Motor neuron (in vitro differentiated cells): ENCODE measurements at regions of chr2 and their contacts with region 1.

Region 1: DNA sequence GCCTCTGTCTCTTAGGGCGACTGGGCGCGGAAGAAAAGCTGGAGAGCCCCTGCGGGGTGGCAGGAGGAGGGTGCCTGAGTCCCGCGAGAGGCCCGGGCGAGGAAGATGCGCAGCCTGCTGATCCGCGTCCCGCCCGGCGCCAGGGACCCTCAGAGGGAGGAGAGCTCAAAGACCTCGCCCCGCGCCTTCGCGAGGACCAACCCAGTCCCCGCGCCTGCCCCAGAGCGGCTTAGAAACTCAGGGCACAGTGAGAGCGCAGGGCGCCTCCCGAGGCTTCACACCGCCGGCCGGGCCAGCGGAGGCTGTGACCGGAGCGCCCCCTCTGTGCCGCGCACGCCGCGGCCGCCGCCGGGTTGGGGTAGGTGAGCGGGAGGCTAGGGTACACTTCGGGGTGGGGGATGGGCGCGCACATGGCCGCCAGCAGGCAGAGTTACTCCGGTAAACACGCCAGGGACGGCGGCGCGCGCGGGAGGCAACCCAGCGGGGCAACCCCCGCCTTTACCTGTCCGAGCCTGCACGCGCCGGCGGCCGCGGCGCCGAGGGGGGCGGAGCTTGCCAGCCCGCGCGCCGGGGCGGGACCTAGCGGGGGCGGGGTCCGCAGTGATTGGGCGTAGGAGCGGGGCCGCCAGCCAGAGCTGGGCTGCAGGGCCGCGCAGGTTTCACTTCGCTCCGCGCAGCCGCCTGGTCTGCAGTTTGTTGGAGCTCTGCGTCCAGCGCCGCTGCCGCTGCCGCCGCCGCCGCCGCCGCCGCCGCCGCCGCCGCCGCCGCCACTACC is at the start of gene BCL2L11:
- ATAC-seq: peak; percentile 48 to 80 (median 76)
- H3K4me3 ChIP-seq: peak within 1 kb of the TSS; percentile 57 to 86 (median 64)
- H3K27ac ChIP-seq: no peak within 1 kb of the TSS
- H3K4me1 ChIP-seq: peaks cover 2 to 17% of the 10 kb centered on the region in 2 donors
- total RNA-seq, gene BCL2L11: 2.4 to 13.1 (median 7.3) TPM

Region 2: DNA sequence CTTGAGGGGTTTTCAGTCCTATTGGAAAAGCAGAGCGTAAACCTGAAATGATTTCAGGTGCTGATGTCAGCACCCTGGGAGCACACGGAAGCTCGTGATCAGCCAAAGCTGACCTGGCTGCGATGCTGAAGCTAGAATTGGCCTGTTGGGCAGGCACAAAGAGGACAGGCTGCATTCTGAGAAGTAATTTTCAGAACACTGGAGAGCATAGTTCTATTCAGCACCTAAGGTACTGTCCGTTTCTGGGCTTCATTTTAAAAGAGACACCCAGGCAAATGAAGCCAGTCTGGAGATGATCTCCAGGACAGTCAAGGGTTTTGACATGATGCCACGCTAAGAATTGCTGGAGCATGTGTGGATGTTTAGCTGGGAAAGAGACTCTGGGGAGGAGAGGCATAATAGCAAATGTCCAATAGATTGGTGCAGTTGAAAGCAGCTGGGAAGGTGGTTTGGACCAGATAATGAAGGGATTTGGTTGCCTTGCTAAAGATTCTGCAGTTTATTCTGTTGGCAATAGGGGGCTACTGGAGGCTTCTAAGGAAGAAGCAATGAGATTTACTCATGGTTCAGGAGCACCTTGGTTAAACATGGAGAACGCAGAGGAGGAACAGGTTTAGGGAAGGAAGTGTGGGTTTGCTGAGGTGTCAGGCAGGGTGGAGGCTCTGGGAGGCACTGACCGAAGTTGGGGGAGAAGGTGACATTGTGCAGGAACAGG is 301.5 kb before region 1 on chr2:
- in situ Hi-C with region 1: loop called in 1 of 9 experiments (anchors 10 kb)
- ATAC-seq: no peak
- H3K4me3 ChIP-seq: no peak overlapping the region
- H3K27ac ChIP-seq: no peak overlapping the region
- H3K4me1 ChIP-seq: no peaks in the 10 kb centered on the region

Region 3: DNA sequence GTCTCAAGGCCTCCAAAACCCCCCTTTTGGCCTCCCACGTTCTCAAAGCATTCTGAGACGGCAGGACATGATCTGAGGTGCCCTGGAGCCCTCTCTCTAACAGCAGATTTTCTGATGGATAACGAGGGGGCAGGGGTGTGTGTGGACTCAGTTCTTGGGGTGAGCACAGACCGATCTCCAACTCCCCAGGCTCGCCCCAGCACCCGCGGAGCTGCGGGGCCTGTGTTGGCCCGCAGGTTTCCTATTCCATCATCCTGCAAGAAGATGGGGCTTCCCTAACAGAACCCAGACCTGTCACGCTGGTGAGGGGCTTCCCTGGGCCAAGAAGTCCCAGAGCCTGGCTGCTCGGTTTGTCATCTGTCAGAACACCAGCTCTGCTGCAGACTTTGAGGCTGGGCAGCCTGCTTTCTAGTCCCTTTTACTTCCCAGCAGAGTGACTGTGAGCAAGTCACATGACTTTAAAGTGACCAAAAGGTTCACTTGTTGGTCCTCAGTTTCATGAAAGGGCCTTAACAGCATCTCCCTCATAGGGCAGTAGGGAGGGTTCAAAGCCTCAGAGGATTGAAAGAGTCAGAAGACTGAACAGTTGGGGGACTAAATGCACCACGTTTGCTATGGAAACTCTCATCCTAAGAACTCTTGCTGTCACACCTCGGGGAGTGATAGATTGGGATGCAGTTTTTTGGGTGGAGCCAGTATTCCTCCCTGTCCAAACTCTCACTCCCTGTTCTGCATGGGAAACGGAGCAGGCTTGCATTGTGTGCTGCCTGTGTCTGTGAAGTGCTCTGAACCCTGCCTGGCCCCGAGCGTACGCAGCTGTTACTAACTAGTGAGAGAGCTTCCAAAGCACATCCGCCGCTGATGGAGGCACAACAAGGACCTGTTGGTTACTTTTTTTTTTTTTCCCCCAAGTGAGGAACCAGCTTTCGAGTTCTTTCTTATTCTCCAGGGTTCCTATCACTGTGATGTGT is 567.8 kb after region 1 on chr2:
- in situ Hi-C with region 1: no loop called
- ATAC-seq: peak in 7 of 8 experiments; percentile 32 to 84 (median 47)
- H3K4me3 ChIP-seq: no peak overlapping the region
- H3K27ac ChIP-seq: no peak overlapping the region
- H3K4me1 ChIP-seq: no peaks in the 10 kb centered on the region

Region 4: GRCh38 chr2:111705711-111706336 is 585.4 kb after region 1 on chr2:
- in situ Hi-C with region 1: loop called in 3 of 9 experiments (anchors 25 kb)
- ATAC-seq: peak; percentile 48 to 91 (median 76)
- H3K4me3 ChIP-seq: no peak overlapping the region
- H3K27ac ChIP-seq: no peak overlapping the region
- H3K4me1 ChIP-seq: peaks cover 8 to 18% of the 10 kb centered on the region in 2 donors

Region 5: GRCh38 chr2:112706170-112706664 is 1585.8 kb after region 1 on chr2:
- in situ Hi-C with region 1: no loop called
- ATAC-seq: peak in 2 of 8 experiments; percentile 7 to 13
- H3K4me3 ChIP-seq: no peak overlapping the region
- H3K27ac ChIP-seq: no peak overlapping the region
- H3K4me1 ChIP-seq: no peaks in the 10 kb centered on the region